Mammary epithelial cell (primary cell): ENCODE measurements at regions of chr12 and their contacts with region 1.

Region 1: DNA sequence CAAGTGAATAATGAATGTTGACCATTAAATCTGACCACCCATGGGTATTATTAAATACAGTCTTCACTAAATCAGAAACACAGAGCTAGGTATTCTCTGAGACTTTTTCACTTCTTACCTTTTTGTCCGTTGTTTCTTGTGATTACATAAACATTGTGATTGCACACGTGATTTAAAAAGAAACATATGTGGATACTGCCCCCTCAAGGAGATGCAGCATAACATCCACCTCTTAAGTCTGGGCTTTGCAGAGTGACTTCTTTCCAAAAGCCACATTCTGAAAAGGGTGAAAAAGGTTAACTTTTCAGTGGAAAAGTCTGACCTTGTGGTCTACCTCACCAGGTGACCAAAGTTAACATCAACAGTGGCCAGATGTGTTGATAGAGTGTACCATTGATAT is 185.5 kb upstream of the FAR2 start:
- DNase-seq: peak; percentile 54
- H3K4me3 ChIP-seq: no peak overlapping the region
- H3K27ac ChIP-seq: no peak overlapping the region
- H3K4me1 ChIP-seq: peaks cover 7% of the 10 kb centered on the region
- H3K27me3 ChIP-seq: no peaks in the 10 kb centered on the region
- CTCF ChIP-seq: peak; percentile 66 to 68

Region 2: GRCh38 chr12:28172434-28173030 is 791.0 kb before region 1 on chr12:
- CTCF ChIA-PET with region 1: no interaction called
- dilution Hi-C with region 1: no loop called
- in situ Hi-C with region 1: no loop called
- intact Hi-C with region 1: loop called (anchors 1 kb)
- DNase-seq: peak; percentile 63
- H3K4me3 ChIP-seq: no peak overlapping the region
- H3K27ac ChIP-seq: peak overlapping the region; percentile 23
- H3K4me1 ChIP-seq: peaks cover 12% of the 10 kb centered on the region
- H3K27me3 ChIP-seq: no peaks in the 10 kb centered on the region
- CTCF ChIP-seq: peak; percentile 80 to 85

Region 3: DNA sequence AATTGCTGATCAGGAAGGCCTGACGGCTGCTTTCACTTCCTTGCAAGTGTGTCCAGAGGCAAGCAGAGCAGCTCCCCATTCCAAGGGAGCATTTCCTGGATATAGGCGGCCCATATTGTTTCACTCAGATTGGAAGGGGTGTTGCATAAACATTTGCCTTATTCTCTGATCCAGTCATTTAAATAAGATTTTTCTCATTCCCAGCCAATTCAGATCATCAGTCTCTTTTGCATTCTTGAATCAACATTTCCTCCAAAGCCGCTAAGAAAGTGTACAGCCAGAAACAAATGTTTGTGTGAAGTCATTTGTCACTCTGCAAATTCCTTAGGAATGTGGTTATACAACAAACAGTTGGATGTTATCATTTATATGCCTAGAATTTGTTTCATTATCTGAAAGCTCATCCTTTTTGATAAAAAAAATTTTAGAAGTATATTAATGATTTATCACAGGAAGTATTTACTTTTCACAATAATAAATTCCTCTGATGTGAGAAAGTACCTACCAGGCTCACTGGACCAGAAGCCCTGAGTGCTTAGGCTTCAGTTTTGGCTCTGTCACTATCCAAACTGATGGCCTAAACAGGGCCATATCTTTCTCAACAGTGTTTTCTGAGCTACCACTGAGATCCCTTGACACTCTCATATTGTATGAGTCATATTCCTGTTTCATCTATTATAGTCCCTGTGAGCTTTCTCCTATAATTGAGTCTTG is 393.7 kb before region 1 on chr12:
- CTCF ChIA-PET with region 1: no interaction called
- dilution Hi-C with region 1: no loop called
- in situ Hi-C with region 1: no loop called
- intact Hi-C with region 1: loop called (anchors 1 kb)
- DNase-seq: peak; percentile 50
- H3K4me3 ChIP-seq: no peak overlapping the region
- H3K27ac ChIP-seq: no peak overlapping the region
- H3K4me1 ChIP-seq: no peaks in the 10 kb centered on the region
- H3K27me3 ChIP-seq: no peaks in the 10 kb centered on the region
- CTCF ChIP-seq: no peak

Region 4: GRCh38 chr12:28759312-28759751 is 204.2 kb before region 1 on chr12:
- CTCF ChIA-PET with region 1: no interaction called
- dilution Hi-C with region 1: no loop called
- in situ Hi-C with region 1: no loop called
- intact Hi-C with region 1: loop called (anchors 5 kb)
- DNase-seq: peak; percentile 97
- H3K4me3 ChIP-seq: no peak overlapping the region
- H3K27ac ChIP-seq: no peak overlapping the region
- H3K4me1 ChIP-seq: no peaks in the 10 kb centered on the region
- H3K27me3 ChIP-seq: no peaks in the 10 kb centered on the region
- CTCF ChIP-seq: peak; percentile 49 to 55

Region 5: GRCh38 chr12:28884904-28885679 is 78.5 kb before region 1 on chr12:
- CTCF ChIA-PET with region 1: no interaction called
- dilution Hi-C with region 1: no loop called
- in situ Hi-C with region 1: no loop called
- intact Hi-C with region 1: no loop called
- DNase-seq: no peak
- H3K4me3 ChIP-seq: no peak overlapping the region
- H3K27ac ChIP-seq: no peak overlapping the region
- H3K4me1 ChIP-seq: peaks cover 10% of the 10 kb centered on the region
- H3K27me3 ChIP-seq: no peaks in the 10 kb centered on the region
- CTCF ChIP-seq: no peak